Activated CD4-positive, alpha-beta T cell treated with anti-CD3 and anti-CD28 coated beads for 36 hours (primary cell): ENCODE measurements at regions of chr19 and their contacts with region 1.

Region 1: DNA sequence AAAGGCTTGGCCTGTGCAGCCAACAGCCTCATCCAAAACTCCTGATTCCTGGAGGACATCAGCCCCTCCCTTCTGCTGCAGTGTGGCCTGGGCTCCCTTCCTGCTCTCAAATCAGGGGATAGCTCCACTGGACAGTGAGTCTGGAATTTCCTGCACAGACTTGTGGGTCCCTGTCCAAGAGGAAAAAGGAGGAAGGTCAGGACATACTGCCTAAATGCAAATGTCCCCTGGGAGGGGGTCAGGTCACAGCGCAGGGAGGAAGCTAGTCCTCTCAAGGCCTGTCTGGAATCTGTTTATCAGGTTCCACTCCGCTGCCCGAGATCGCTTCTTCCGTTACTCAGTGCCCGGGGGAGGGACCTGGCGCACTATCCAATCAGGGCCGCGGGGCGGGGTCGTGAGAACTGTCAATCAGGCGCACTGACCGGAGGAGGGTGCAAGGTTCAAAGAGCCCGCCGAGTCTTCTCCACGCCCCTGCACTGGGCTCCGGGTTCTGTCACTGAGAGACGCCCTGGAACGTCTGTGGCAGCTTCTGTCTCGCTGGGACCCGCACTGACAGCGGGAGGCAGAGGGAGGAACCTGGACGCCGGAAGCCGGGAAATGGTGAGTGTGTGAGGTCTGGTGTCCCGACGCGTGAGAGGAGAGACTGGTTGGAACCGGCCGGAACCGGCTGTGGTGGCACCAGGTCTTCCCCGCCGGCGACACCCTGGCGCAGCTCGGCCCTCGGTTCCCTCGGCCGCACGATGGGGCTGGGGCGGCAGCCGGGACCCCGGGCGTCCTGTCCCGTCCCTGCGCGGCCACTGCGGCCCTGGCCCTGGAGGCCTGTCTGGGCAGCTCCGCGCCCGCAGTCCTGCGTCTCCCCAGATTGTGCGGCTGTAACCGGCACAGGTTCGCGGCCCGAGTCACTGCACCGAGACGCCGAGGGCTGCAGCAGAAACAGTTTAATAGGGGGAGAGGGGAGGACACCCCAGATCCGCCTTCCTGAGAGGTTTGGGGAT is at the start of gene ZNF441:
- DNase-seq: peak; percentile 98
- ATAC-seq: peak; percentile 99
- H3K4me3 Mint-ChIP-seq: peak within 1 kb of the TSS; percentile 88
- H3K27ac Mint-ChIP-seq: peak within 1 kb of the TSS; percentile 95
- H3K4me1 Mint-ChIP-seq: peaks cover 13% of the 10 kb centered on the region
- H3K27me3 Mint-ChIP-seq: peaks cover 12% of the 10 kb centered on the region
- total RNA-seq, gene ZNF441: 4.3 to 5.0 TPM

Region 2: GRCh38 chr19:11694533-11695439 is 72.1 kb before region 1 on chr19:
- CTCF ChIA-PET with region 1: no interaction called
- POLR2A ChIA-PET with region 1: no interaction called
- intact Hi-C with region 1: loop called in 1 of 2 experiments (anchors 2 kb)
- DNase-seq: peak; percentile 96
- ATAC-seq: peak; percentile 99
- H3K4me3 Mint-ChIP-seq: peak overlapping the region; percentile 84
- H3K27ac Mint-ChIP-seq: peak overlapping the region; percentile 84
- H3K4me1 Mint-ChIP-seq: peaks cover 10% of the 10 kb centered on the region
- H3K27me3 Mint-ChIP-seq: peaks cover 28% of the 10 kb centered on the region